Common myeloid progenitor, CD34-positive (primary cell): ENCODE measurements at regions of chr12 and their contacts with region 1.

Region 1: DNA sequence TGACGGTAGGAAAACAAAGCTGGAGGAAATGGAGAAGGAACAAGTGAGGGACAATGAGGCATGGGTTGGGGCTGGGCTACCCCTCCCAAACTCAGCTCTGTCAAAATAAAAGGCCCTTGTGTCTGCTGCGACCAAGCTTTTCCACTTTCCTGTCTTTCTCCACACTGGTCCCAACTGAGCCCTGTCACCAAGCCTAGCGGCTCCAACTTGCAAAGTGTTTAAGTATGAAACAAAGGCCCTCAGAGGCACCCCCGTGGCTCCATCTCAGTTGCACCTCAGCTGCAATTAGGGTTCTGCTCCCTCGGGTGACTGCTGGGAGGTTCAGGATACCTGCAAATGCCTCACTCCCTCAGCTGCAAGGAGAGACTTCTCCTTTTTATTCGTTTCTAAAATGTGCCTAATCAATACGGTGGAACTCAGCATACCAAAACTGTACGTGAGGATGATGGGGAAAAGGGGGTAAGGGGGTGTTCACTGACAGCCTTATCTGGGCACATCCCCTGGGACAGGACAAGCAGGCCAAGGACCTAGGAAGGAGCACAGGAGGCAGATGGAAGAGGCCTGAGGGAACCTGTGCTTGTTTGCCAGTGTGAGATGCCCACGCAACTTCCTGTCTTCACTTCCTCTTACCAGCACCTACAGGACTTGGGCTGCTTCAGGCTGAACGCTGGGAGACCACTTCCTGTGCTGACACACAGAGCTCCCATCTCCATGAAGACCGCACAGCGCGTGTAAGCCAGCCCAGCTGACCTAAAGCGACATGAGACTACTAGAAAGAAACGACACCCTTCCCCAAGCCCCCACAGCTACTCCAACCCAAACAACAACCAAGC is 8.9 kb downstream of the VAMP1 start:
- DNase-seq: peak; percentile 94 to 98 (median 97)
- H3K4me3 ChIP-seq: peak overlapping the region in 3 of 7 experiments; percentile 21 to 48 (median 34)
- H3K27ac ChIP-seq: peak overlapping the region; percentile 69 to 83
- H3K4me1 ChIP-seq: peaks cover 20 to 69% (median 50%) of the 10 kb centered on the region in 4 experiments
- H3K27me3 ChIP-seq: no peaks in the 10 kb centered on the region

Region 2: DNA sequence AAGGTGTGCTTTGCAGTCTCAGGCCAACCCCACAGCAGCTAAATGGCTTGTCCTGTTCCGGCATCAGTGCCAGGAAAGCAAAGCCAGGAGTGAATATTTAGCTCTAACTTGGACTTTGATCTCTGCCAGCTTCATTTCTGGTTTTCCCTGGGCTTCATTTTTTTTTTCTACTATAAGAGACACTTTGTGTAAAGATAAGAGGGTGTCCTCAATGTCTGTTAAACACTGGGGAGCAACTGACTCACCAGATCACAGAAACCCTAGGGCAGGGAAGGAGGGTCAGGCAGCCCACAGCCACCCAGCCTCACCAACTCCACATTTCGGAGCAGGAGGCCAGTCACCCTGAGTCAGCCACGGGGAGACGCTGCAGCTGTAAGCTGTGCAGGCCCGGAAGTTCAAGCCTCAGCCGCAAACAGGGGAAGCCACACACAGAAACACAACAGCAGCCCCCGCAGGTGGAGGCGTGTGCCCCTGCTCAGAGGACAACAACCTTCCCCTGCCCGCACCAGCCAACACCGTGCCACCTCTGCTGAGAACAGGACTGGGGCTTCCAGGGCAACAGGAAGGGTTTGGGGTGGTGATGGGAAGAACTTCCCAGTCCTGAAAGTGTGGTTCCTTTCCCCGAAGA is 126.1 kb before region 1 on chr12:
- CTCF ChIA-PET with region 1: interaction called, 24 read pairs
- POLR2A ChIA-PET with region 1: no interaction called
- DNase-seq: peak; percentile 87 to 96 (median 94)
- H3K4me3 ChIP-seq: peak overlapping the region in 6 of 7 experiments; percentile 65 to 99 (median 98)
- H3K27ac ChIP-seq: peak overlapping the region; percentile 74 to 96
- H3K4me1 ChIP-seq: peaks cover 30 to 81% (median 78%) of the 10 kb centered on the region in 4 experiments
- H3K27me3 ChIP-seq: no peaks in the 10 kb centered on the region

Region 3: DNA sequence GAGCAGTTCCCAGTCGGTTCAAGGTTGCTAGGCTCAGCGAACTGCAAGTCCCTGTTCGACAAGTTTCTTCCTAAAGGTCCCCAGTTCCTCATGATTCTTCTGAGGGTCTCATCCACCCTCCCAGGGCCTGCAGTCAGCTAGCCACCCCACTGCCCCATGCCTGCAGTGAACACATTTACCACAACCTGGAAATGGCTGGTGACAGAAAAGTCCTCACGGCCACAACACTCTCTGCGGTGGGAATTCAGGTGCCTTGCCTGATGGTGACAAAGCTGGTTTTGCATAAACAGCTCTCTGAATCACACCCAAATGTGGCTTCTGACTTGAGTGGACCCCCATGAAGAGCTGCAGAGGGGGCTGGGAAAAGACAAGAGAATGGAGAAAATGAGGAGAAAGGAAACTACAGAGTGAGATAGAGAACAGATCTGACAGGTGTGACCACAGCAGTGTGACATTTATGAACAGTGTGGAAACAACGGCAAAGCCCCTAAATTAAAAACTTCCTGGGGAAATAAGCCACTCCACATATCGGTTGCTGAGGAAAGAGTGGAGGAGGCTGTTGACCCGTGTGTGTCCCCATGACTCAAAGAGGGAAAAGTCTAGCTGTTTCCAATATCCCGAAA is 18.1 kb before region 1 on chr12:
- CTCF ChIA-PET with region 1: interaction called, 16 read pairs
- POLR2A ChIA-PET with region 1: interaction called, 4 read pairs
- DNase-seq: peak in 2 of 3 donors; percentile 81 to 87
- H3K4me3 ChIP-seq: peak overlapping the region in 1 of 7 experiments; percentile 20
- H3K27ac ChIP-seq: no peak overlapping the region
- H3K4me1 ChIP-seq: peaks cover 12 to 45% (median 39%) of the 10 kb centered on the region in 4 experiments
- H3K27me3 ChIP-seq: peaks cover 0 to 1% (median 0%) of the 10 kb centered on the region in 5 experiments

Region 4: GRCh38 chr12:6451348-6452244 is 10.0 kb before region 1 on chr12 and contains the start of gene TAPBPL:
- CTCF ChIA-PET with region 1: interaction called, 34 read pairs
- POLR2A ChIA-PET with region 1: interaction called, 15 read pairs
- DNase-seq: peak; percentile 78 to 92 (median 89)
- H3K4me3 ChIP-seq: peak within 1 kb of the TSS; percentile 64 to 98 (median 93)
- H3K27ac ChIP-seq: peak within 1 kb of the TSS; percentile 84 to 95
- H3K4me1 ChIP-seq: peaks cover 5 to 31% (median 28%) of the 10 kb centered on the region in 4 experiments
- H3K27me3 ChIP-seq: no peaks in the 10 kb centered on the region

Region 5: GRCh38 chr12:6662906-6663742 is 201.5 kb after region 1 on chr12 and contains the start of gene ING4:
- CTCF ChIA-PET with region 1: no interaction called
- POLR2A ChIA-PET with region 1: no interaction called
- DNase-seq: peak; percentile 99 to 100 (median 99)
- H3K4me3 ChIP-seq: peak within 1 kb of the TSS; percentile 57 to 95 (median 87)
- H3K27ac ChIP-seq: peak within 1 kb of the TSS; percentile 90 to 91
- H3K4me1 ChIP-seq: peaks cover 8 to 16% (median 13%) of the 10 kb centered on the region in 4 experiments
- H3K27me3 ChIP-seq: no peaks in the 10 kb centered on the region

Region 6: GRCh38 chr12:6970089-6970527 is 508.5 kb after region 1 on chr12:
- CTCF ChIA-PET with region 1: no interaction called
- POLR2A ChIA-PET with region 1: no interaction called
- DNase-seq: no peak
- H3K4me3 ChIP-seq: peak overlapping the region; percentile 49 to 100 (median 93)
- H3K27ac ChIP-seq: peak overlapping the region; percentile 82 to 91
- H3K4me1 ChIP-seq: peaks cover 5 to 32% (median 24%) of the 10 kb centered on the region in 4 experiments
- H3K27me3 ChIP-seq: no peaks in the 10 kb centered on the region